ENCODE measurements at regions of chr9 and their contacts with region 1.

Region 1: DNA sequence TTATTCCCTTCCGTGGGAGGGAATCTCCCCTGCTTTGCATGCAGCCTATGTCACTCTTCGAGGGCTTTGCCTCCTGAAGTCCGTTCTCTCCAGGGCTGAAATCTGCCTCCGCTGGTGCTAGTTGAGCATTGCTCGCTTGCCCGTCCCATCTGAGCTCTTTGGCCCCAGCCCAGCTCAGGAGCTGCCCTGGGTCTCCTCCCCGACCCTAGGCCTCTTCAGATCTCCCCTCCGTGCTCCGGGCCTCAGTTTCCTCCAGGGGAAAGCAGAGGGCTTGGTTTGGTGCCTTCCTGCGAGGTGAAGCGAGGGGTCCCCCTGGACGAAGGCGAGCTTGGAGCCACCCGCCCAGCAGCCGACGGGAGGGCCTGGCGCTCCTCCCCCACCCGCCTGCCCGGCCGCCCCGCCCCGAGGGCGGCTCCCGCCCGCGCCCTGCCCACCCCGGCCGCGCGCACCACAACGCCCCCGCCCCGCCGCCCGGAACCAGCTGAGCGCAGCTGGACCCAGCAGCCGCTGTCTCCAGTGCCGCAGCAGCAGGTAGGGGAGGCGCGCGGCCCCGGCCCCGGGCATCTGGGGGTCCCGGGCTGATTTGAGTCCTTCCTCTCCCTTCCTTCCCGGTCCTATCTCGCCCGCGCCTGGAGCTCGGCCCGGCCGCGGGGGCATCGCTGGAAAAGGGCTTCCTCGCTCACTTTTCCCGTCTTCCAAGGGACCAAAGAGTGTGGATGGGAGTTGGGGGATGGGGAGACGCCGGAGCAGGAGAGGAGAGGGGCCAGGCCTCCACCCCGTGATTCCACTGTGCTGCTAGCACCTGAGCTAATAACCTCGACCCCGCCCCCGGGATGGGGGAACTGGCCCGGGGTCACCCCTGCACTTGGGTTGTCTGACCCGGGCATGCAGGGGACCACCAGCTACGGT is at the start of gene GSN:
- DNase-seq: peak; percentile 88
- H3K27ac ChIP-seq: peak within 1 kb of the TSS; percentile 73
- CTCF ChIP-seq: no peak

Region 2: DNA sequence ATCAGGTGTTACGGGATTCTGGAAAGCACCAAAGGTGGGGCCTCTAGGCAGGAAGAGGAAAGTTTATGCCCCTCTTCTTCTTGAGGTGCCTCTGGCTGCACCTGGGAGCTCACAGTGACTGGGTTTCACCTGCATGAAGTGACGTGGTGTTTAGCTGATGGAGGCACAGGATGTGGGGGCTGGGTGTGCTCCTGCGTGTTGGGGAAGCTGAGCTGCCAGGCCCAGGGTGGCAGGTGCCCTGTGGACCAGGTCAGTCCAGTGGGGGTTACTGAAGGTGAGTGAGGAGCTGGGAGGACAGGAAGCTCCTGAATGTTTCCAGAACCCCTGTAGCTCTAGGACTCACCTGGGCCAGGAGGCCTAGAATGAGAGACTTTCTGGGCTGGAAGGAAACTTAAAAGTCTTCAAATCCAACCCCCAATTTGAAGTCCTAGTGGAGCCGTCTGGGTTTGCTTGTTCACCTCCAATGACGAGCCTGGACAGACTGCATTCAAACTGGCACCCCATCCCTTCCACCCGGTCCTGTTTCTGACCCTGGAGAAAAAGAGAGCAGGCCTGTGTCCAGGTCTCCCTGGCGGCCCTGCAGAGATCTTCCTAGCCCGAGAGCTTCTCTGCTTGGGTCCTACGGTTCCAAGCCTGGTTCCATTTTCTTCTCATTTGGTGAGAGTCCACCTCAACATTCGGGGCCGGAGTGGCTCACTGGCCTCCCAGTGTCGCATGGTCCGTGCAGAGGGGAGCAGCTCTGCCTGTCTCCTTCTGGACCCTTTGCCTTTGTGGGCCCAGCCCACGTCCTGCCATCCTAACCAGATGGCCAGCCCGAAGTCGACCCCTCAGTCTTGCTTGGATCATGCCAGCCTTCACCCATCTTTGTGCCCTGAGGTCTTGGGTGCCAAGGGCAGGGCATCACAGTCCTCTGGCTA is 363.6 kb before region 1 on chr9:
- CTCF ChIA-PET with region 1: no interaction called
- POLR2A ChIA-PET with region 1: no interaction called
- DNase-seq: no peak
- H3K27ac ChIP-seq: no peak overlapping the region
- CTCF ChIP-seq: no peak

Region 3: DNA sequence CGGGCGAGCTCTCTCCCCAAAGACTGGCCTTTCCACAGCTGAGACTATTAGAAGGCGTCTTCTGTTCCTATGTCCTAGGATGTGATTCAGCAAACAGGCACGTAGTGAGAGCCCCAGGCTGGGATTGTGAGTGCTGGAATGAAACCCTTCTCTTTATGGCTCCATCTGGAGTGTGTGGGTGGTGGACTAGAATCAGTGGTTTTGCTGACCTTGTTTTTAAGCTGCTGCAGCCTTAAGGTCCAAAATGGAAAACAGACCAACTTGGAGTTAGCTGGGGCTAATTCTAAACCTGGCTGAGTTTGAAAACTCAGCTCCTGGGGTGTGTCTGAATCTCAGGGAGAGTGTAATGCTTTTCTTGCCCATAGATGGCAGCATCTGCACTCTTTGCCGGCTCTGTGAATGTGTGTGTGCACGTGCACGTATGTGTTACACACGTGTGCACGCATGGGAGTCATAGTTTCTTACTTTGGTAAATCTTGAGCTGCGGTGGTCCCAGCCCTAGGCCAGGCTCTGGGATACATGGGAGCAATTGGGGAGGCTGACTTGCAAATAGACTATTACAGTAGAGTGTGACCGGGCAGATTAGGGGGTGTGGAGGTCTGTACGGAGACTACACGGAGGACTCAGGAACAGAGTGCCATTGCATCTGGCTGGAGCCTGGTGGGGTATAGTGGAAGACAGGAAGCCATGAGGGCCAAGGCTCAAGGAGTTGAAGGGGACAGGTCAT is 10.8 kb after region 1 on chr9:
- CTCF ChIA-PET with region 1: interaction called, 31 read pairs
- POLR2A ChIA-PET with region 1: interaction called, 14 read pairs
- DNase-seq: peak; percentile 94
- H3K27ac ChIP-seq: peak overlapping the region; percentile 98
- CTCF ChIP-seq: peak; percentile 97